ENCODE measurements at regions of chr6 and their contacts with region 1.

Region 1: GRCh38 chr6:159174263-159174969 is 5.2 kb downstream of the FNDC1 start:
- DNase-seq: peak; percentile 82
- H3K4me3 ChIP-seq: peak overlapping the region in 1 of 2 experiments; percentile 48; a peak in 1 of 4 replicates
- H3K27ac ChIP-seq: no peak overlapping the region
- H3K4me1 ChIP-seq: peaks cover 0 to 2% of the 10 kb centered on the region in 2 experiments; a peak in 1 of 4 replicates
- H3K27me3 ChIP-seq: peaks cover 61% of the 10 kb centered on the region
- CTCF ChIP-seq: peak; percentile 98
- EP300 ChIP-seq: no peak
- RAD21 ChIP-seq: peak; percentile 92

Region 2: DNA sequence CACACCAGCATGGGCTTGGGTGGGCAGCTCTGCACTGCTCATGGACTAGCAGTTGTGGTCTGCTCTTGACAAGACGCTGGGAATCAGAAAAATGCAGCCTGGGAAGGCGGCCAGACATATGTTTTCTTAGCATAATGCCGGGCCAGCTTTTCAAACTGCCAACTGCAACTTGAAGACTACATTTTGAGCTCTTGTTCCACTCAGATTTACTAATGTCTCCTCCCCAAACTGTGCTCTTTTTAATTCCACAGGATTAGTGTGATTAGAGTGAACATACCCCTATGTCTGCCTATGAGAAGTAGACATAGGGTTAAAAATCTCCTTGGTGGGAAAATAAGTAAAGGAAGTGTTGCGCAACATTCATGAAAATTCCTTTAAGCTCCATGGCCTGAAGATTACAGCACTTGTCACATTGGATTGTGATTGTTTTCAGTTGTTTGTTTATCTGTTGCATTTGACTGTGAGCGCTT is 10.5 kb before region 1 on chr6:
- CTCF ChIA-PET with region 1: interaction called, 17 read pairs
- POLR2A ChIA-PET with region 1: no interaction called
- DNase-seq: no peak
- H3K4me3 ChIP-seq: no peak overlapping the region
- H3K27ac ChIP-seq: no peak overlapping the region
- H3K4me1 ChIP-seq: no peaks in the 10 kb centered on the region; a peak in 1 of 4 replicates
- H3K27me3 ChIP-seq: peaks cover 49% of the 10 kb centered on the region
- CTCF ChIP-seq: no peak
- EP300 ChIP-seq: no peak
- RAD21 ChIP-seq: no peak

Region 3: DNA sequence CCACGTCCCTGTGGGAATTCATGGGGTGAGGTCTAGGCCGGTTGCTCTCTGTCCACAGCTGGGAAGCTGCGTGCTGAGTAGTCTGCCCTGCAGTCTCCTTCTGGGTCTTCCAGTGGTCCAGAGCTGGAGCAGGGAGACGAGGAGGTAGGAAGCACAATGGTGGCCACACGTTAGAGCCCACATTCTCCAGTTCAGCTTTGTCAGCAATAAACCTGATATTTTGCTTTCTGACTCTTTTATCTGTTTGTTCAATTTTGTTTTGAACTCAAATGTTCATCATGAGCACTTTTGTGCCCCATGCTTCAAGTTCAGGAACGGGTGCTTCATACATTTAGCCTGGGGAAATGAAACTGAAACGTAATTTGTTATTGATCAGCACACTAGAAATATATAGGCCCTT is 16.0 kb after region 1 on chr6:
- CTCF ChIA-PET with region 1: interaction called, 49 read pairs
- POLR2A ChIA-PET with region 1: no interaction called
- DNase-seq: no peak
- H3K4me3 ChIP-seq: no peak overlapping the region
- H3K27ac ChIP-seq: no peak overlapping the region
- H3K4me1 ChIP-seq: no peaks in the 10 kb centered on the region
- H3K27me3 ChIP-seq: peaks cover 10% of the 10 kb centered on the region; the same call in 1 of the 2 replicates
- CTCF ChIP-seq: no peak
- EP300 ChIP-seq: no peak
- RAD21 ChIP-seq: no peak

Region 4: DNA sequence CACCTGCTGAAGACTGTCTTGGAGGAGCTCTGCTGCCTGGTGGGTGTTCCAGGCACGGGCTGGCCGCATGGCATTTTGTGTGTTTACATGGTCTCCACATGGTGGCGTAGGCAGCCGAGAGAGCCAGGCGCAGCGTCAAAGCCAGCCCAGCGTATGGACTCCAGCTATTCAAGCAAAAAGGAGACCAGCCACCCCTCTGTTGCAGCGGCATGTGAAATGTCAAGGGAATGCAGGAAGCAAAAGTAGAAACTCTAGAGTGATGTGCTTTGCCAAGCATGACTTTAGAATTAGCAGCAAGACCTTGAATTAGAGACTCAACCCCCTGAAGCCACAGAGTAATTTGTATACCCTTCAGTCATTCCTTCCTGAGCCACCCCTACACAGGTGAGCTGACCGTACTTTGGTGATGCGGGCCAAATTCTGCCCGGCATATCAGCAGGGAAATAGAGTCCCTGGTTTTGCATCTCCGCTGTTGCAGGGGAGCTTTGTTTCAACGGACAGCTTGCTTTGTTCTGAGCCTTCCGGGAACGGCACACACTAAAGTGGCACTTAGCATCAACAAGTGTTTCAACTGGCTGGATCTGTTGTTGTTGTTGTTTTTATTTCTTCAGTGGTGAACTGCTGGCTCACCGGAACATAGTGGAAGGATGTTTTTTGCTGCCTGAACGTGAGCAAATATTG is 43.3 kb after region 1 on chr6:
- CTCF ChIA-PET with region 1: interaction called, 29 read pairs
- POLR2A ChIA-PET with region 1: no interaction called
- DNase-seq: peak; percentile 72
- H3K4me3 ChIP-seq: no peak overlapping the region
- H3K27ac ChIP-seq: no peak overlapping the region
- H3K4me1 ChIP-seq: no peaks in the 10 kb centered on the region
- H3K27me3 ChIP-seq: peaks cover 44% of the 10 kb centered on the region
- CTCF ChIP-seq: peak; percentile 57
- EP300 ChIP-seq: no peak
- RAD21 ChIP-seq: peak; percentile 72

Region 5: GRCh38 chr6:159633196-159633595 is 458.8 kb after region 1 on chr6:
- CTCF ChIA-PET with region 1: interaction called, 12 read pairs
- POLR2A ChIA-PET with region 1: no interaction called
- DNase-seq: peak; percentile 47
- H3K4me3 ChIP-seq: no peak overlapping the region
- H3K27ac ChIP-seq: no peak overlapping the region
- H3K4me1 ChIP-seq: no peaks in the 10 kb centered on the region
- H3K27me3 ChIP-seq: no peaks in the 10 kb centered on the region
- CTCF ChIP-seq: peak; percentile 77
- EP300 ChIP-seq: no peak
- RAD21 ChIP-seq: peak; percentile 39; the same call in 1 of the 2 replicates

Region 6: GRCh38 chr6:160261991-160262680 is 1087.7 kb after region 1 on chr6:
- CTCF ChIA-PET with region 1: no interaction called
- POLR2A ChIA-PET with region 1: no interaction called
- DNase-seq: peak; percentile 24
- H3K4me3 ChIP-seq: no peak overlapping the region
- H3K27ac ChIP-seq: no peak overlapping the region
- H3K4me1 ChIP-seq: no peaks in the 10 kb centered on the region
- H3K27me3 ChIP-seq: peaks cover 35% of the 10 kb centered on the region; the same call in 1 of the 2 replicates
- CTCF ChIP-seq: peak; percentile 10; the same call in 1 of the 2 replicates
- EP300 ChIP-seq: no peak
- RAD21 ChIP-seq: no peak